ENCODE measurements at regions of chr1 and their contacts with region 1.

Region 1: DNA sequence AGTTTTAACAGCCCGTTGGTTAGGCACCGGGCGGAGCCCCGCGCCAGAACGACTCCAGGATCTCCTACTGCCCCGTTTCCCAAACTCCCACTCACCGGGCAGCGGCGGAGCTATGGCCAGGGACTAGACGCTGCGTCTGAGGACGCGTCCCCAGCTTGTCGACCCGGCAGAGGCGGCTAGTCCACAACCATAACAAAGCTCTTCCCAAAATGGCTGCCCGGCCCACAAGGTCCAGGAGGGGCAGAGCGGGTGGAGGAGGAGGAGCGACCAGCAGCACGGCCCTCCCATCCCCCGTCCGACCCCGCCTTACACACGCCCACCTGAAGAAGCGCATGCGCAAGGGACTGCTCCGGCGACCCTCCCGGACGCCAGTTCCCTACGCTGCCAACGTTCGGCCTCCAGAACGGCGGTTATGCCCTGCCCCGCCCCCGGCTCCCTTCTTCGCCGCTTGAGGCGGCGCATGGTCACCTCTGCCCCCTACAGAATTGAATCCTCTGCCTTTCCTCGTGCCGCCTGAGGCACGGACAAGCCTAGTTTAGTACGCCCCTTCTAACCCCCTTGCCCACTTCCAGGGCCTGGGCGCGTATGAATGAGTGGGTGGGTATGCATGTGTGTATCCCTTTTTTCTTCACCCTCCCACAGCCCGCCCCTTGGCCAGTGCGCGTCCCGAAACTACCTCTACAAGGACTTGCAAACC is at the start of gene GPBP1L1:
- DNase-seq: peak; percentile 99
- H3K4me3 Mint-ChIP-seq: peak within 1 kb of the TSS; percentile 98
- H3K27ac Mint-ChIP-seq: peak within 1 kb of the TSS; percentile 100
- H3K4me1 Mint-ChIP-seq: peaks cover 50% of the 10 kb centered on the region
- H3K27me3 Mint-ChIP-seq: no peaks in the 10 kb centered on the region
- total RNA-seq, gene GPBP1L1: 113 to 122 TPM

Region 2: GRCh38 chr1:44985747-44986359 is 700.6 kb before region 1 on chr1:
- CTCF ChIA-PET with region 1: no interaction called
- intact Hi-C with region 1: loop called (anchors 5 kb)
- DNase-seq: no peak
- H3K4me3 Mint-ChIP-seq: peak overlapping the region; percentile 100
- H3K27ac Mint-ChIP-seq: peak overlapping the region; percentile 80
- H3K4me1 Mint-ChIP-seq: peaks cover 23% of the 10 kb centered on the region
- H3K27me3 Mint-ChIP-seq: no peaks in the 10 kb centered on the region

Region 3: DNA sequence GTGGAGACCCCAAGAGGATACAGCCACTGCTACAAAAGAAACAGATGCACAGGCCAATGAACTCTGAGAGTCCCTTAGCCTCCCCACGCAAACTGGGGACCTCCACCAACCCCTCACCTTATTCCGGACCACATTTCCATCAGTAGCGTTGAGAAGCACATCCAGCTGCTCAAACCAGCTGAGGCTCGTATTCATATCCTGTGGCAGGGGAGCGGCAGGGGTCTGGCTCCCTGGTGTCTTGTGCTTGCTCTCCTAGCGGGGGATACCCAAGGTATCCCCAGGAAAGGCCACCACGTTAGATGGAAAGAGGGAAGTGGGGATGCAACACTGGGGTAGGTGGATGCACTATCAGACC is 187.1 kb before region 1 on chr1:
- CTCF ChIA-PET with region 1: no interaction called
- intact Hi-C with region 1: loop called (anchors 1 kb)
- DNase-seq: peak; percentile 30
- H3K4me3 Mint-ChIP-seq: peak overlapping the region; percentile 91
- H3K27ac Mint-ChIP-seq: peak overlapping the region; percentile 84
- H3K4me1 Mint-ChIP-seq: peaks cover 32% of the 10 kb centered on the region
- H3K27me3 Mint-ChIP-seq: no peaks in the 10 kb centered on the region

Region 4: GRCh38 chr1:45535988-45536766 is 150.3 kb before region 1 on chr1:
- CTCF ChIA-PET with region 1: no interaction called
- intact Hi-C with region 1: no loop called
- DNase-seq: no peak
- H3K4me3 Mint-ChIP-seq: no peak overlapping the region
- H3K27ac Mint-ChIP-seq: no peak overlapping the region
- H3K4me1 Mint-ChIP-seq: peaks cover 7% of the 10 kb centered on the region
- H3K27me3 Mint-ChIP-seq: no peaks in the 10 kb centered on the region

Region 5: GRCh38 chr1:45583264-45583665 is 103.2 kb before region 1 on chr1:
- CTCF ChIA-PET with region 1: no interaction called
- intact Hi-C with region 1: loop called (anchors 1 kb)
- DNase-seq: peak; percentile 96
- H3K4me3 Mint-ChIP-seq: peak overlapping the region; percentile 95
- H3K27ac Mint-ChIP-seq: peak overlapping the region; percentile 98
- H3K4me1 Mint-ChIP-seq: peaks cover 22% of the 10 kb centered on the region
- H3K27me3 Mint-ChIP-seq: no peaks in the 10 kb centered on the region

Region 6: GRCh38 chr1:45843474-45843905 is 157.0 kb after region 1 on chr1:
- CTCF ChIA-PET with region 1: no interaction called
- intact Hi-C with region 1: loop called (anchors 1 kb)
- DNase-seq: no peak
- H3K4me3 Mint-ChIP-seq: no peak overlapping the region
- H3K27ac Mint-ChIP-seq: no peak overlapping the region
- H3K4me1 Mint-ChIP-seq: peaks cover 11% of the 10 kb centered on the region
- H3K27me3 Mint-ChIP-seq: no peaks in the 10 kb centered on the region

Region 7: DNA sequence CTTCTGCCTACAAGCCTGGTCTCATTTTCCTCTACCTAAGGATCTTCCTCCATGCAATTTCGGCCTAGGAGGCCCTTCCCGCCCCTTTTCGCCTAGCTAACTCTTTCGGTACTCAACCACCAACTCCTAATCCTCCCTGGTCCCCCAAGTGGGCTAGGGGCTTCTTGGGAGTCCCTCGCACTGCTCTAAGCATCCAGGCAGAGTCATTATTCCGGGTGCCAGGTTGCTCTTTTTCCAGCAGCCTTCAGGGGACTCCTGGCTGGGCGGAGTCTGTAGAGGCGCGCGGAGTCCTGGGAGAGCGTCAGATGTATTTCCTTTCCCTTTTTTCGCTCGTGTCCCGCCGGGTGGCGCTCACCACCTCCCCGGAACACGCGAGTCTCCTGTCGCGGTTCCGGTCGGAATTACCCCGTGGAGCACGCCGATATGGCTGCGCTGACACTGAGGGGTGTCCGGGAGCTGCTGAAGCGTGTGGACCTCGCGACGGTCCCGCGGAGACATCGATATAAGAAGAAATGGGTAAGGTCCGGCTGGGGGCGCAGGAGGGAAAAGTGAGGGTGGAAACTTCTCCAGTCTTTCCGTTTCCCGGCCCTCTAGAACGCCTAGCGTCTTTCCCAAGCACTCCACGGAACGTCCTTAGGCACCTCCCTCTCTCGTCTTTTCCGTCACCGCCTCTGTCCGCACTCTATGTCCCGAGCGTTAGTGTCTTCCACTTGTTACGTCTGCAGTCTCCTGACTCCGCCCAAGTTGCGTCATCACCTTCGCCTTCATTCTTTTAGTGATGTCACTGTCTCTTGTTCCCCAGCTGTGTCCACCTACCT is 654.1 kb after region 1 on chr1 and contains the start of gene NSUN4:
- CTCF ChIA-PET with region 1: no interaction called
- intact Hi-C with region 1: loop called (anchors 1 kb)
- DNase-seq: peak; percentile 95
- H3K4me3 Mint-ChIP-seq: peak within 1 kb of the TSS; percentile 99
- H3K27ac Mint-ChIP-seq: peak within 1 kb of the TSS; percentile 100
- H3K4me1 Mint-ChIP-seq: peaks cover 51% of the 10 kb centered on the region
- H3K27me3 Mint-ChIP-seq: no peaks in the 10 kb centered on the region
- total RNA-seq, gene NSUN4: 33.6 to 37.8 TPM